Heart right ventricle (tissue), 16 donors: ENCODE measurements at regions of chr10 and their contacts with region 1.

Region 1: DNA sequence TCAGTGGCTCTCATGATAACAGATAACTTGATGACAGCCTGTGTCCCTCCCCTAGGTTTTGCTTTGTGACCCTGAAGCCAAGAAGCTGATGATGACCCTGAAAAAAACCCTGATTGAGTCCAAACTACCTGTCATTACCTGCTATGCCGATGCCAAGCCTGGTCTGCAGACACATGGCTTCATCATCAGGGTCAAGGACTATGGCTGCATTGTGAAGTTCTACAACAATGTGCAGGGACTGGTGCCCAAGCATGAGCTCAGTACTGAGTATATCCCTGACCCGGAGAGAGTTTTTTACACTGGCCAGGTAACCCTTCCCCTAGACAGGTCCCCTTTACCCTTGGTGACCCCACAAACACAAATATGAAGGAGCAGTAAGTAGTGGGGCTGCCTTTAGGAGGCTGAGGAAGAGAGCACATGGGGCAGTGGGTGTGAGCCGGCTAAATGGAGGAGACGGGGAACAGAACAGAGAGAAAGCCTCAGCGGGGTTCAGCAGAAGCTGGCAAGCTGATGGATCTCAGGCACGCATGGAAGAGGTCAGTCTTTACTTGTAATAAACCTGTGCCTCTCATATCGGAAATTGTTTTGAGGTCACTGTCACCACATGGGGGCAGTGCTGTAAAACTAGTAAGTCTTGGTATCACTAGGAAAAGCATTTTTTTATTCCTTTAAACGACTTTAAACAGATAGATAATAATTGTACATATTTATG is 20.2 kb downstream of the PDCD11 start:
- DNase-seq: peak in 1 of 2 donors; percentile 67
- ATAC-seq: peak in 5 of 8 donors; percentile 30 to 69 (median 46)
- H3K4me3 ChIP-seq: no peak overlapping the region
- H3K27ac ChIP-seq: no peak overlapping the region
- H3K4me1 ChIP-seq: no peaks in the 10 kb centered on the region
- H3K27me3 ChIP-seq: no peaks in the 10 kb centered on the region
- CTCF ChIP-seq: peak; percentile 40 to 85 (median 72)

Region 2: GRCh38 chr10:103439776-103440175 is 23.2 kb after region 1 on chr10:
- intact Hi-C with region 1: loop called in 1 of 10 experiments (anchors 1 kb)
- DNase-seq: no peak
- ATAC-seq: no peak
- H3K4me3 ChIP-seq: no peak overlapping the region
- H3K27ac ChIP-seq: no peak overlapping the region
- H3K4me1 ChIP-seq: peaks cover 4 to 38% (median 26%) of the 10 kb centered on the region in 9 donors
- H3K27me3 ChIP-seq: no peaks in the 10 kb centered on the region
- CTCF ChIP-seq: no peak

Region 3: GRCh38 chr10:103481974-103482531 is 65.5 kb after region 1 on chr10:
- intact Hi-C with region 1: loop called (anchors 1 to 5 kb)
- DNase-seq: peak in 1 of 2 donors; percentile 61
- ATAC-seq: peak in 6 of 8 donors; percentile 46 to 70 (median 60)
- H3K4me3 ChIP-seq: no peak overlapping the region
- H3K27ac ChIP-seq: no peak overlapping the region
- H3K4me1 ChIP-seq: peaks cover 0 to 17% (median 3%) of the 10 kb centered on the region in 9 donors
- H3K27me3 ChIP-seq: no peaks in the 10 kb centered on the region
- CTCF ChIP-seq: peak; percentile 46 to 79 (median 70)

Region 4: GRCh38 chr10:103592186-103593021 is 175.8 kb after region 1 on chr10:
- intact Hi-C with region 1: loop called in 3 of 10 experiments (anchors 5 to 10 kb)
- DNase-seq: no peak
- ATAC-seq: peak in 7 of 8 donors; percentile 11 to 49 (median 43)
- H3K4me3 ChIP-seq: no peak overlapping the region
- H3K27ac ChIP-seq: no peak overlapping the region
- H3K4me1 ChIP-seq: peaks cover 0 to 14% (median 6%) of the 10 kb centered on the region in 9 donors
- H3K27me3 ChIP-seq: no peaks in the 10 kb centered on the region
- CTCF ChIP-seq: peak; percentile 23 to 70 (median 57)